ENCODE measurements at regions of chr14 and their contacts with region 1.

Region 1: GRCh38 chr14:70698288-70698687 is 56.6 kb downstream of the TTC9 start:
- DNase-seq: peak; percentile 87
- ATAC-seq: peak; percentile 92
- H3K4me3 ChIP-seq: peak overlapping the region; percentile 9
- H3K27ac ChIP-seq: peak overlapping the region; percentile 96
- H3K4me1 ChIP-seq: peaks cover 27% of the 10 kb centered on the region
- H3K27me3 ChIP-seq: no peaks in the 10 kb centered on the region
- CTCF ChIP-seq: no peak

Region 2: GRCh38 chr14:70086685-70087379 is 611.5 kb before region 1 on chr14:
- CTCF ChIA-PET with region 1: no interaction called
- POLR2A ChIA-PET with region 1: interaction called, 24 read pairs
- intact Hi-C with region 1: no loop called
- DNase-seq: peak; percentile 60
- ATAC-seq: peak; percentile 94
- H3K4me3 ChIP-seq: no peak overlapping the region
- H3K27ac ChIP-seq: no peak overlapping the region
- H3K4me1 ChIP-seq: no peaks in the 10 kb centered on the region
- H3K27me3 ChIP-seq: peaks cover 82% of the 10 kb centered on the region
- CTCF ChIP-seq: peak; percentile 87

Region 3: GRCh38 chr14:70622111-70622712 is 76.1 kb before region 1 on chr14:
- CTCF ChIA-PET with region 1: no interaction called
- POLR2A ChIA-PET with region 1: no interaction called
- intact Hi-C with region 1: loop called (anchors 1 kb)
- DNase-seq: peak; percentile 82
- ATAC-seq: peak; percentile 99
- H3K4me3 ChIP-seq: no peak overlapping the region
- H3K27ac ChIP-seq: no peak overlapping the region
- H3K4me1 ChIP-seq: peaks cover 5% of the 10 kb centered on the region; the same call in 1 of the 2 replicates
- H3K27me3 ChIP-seq: no peaks in the 10 kb centered on the region
- CTCF ChIP-seq: peak; percentile 94

Region 4: GRCh38 chr14:70640938-70641547 is 57.2 kb before region 1 on chr14:
- CTCF ChIA-PET with region 1: no interaction called
- POLR2A ChIA-PET with region 1: interaction called, 4 read pairs
- intact Hi-C with region 1: loop called (anchors 1 kb)
- DNase-seq: peak; percentile 69
- ATAC-seq: peak; percentile 78
- H3K4me3 ChIP-seq: peak overlapping the region; percentile 85
- H3K27ac ChIP-seq: no peak overlapping the region
- H3K4me1 ChIP-seq: peaks cover 17% of the 10 kb centered on the region; the same call in 1 of the 2 replicates
- H3K27me3 ChIP-seq: peaks cover 30% of the 10 kb centered on the region
- CTCF ChIP-seq: no peak

Region 5: DNA sequence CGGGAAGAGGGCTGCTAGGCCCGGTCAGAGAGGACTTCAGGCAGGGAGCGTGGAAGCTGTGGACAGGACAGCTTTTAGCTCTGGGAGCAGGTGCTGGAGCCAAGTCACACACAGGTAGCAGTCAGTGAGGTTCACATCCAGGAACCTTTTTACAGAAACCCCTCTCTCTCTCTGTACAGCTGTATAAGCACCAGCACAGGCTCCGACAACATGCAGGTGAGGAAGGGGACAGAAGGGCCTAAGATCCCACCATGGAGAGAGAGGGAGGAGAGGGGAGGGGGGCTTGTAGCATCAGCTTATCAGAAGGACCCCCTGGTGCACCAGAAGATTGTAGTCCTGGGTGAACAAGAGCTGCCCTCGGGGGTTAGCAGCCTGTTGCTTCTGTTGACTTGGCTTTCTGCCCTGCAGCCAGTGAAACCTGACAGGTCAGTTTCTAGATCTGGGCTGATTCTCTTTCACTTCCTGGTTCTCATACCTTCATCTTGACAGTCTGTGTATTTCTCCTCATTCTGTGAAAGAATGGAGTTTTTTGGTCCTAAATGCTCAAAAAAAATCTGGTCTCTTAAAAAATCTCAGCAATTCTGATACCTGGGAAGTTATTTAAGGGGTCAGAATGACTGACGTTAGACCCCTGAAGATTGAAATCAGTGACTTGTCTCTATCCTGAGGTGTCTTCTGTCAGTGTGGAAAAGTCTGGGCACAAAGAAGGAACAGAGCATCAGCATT is 32.9 kb before region 1 on chr14:
- CTCF ChIA-PET with region 1: no interaction called
- POLR2A ChIA-PET with region 1: no interaction called
- intact Hi-C with region 1: loop called (anchors 1 kb)
- DNase-seq: peak; percentile 94
- ATAC-seq: peak; percentile 76
- H3K4me3 ChIP-seq: peak overlapping the region; percentile 18; the same call in 1 of the 2 replicates
- H3K27ac ChIP-seq: peak overlapping the region; percentile 91
- H3K4me1 ChIP-seq: peaks cover 27% of the 10 kb centered on the region
- H3K27me3 ChIP-seq: no peaks in the 10 kb centered on the region
- CTCF ChIP-seq: no peak

Region 6: DNA sequence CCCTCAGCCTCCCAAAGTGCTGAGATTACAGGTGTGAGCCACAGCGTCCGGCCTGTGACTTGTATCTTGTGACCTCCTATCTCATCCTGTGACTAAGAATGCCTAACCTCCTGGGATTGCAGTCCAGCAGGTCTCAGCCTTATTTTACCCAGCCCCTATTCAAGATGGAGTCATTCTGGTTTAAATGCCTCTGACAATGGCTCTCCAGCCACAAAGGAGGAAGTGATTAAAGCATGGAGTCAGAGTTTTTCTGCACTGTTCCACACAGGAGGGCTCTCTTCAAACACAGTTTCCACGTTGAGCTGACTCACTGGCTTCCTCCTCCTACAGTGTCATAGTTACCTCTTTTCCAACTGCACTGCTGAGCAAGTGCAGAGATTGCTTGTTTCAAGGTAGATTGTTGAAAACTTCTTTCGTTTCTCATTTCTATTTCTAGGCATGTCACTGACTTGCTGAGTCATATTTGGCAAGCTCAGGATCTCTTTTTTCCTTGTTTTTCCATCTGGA is 592.7 kb after region 1 on chr14:
- CTCF ChIA-PET with region 1: no interaction called
- POLR2A ChIA-PET with region 1: no interaction called
- intact Hi-C with region 1: loop called (anchors 5 kb)
- DNase-seq: peak; percentile 99
- ATAC-seq: peak; percentile 95
- H3K4me3 ChIP-seq: no peak overlapping the region; the same call in 1 of the 2 replicates
- H3K27ac ChIP-seq: peak overlapping the region; percentile 94
- H3K4me1 ChIP-seq: peaks cover 46% of the 10 kb centered on the region
- H3K27me3 ChIP-seq: no peaks in the 10 kb centered on the region
- CTCF ChIP-seq: no peak